ENCODE measurements at regions of chr1 and their contacts with region 1.

Region 1: GRCh38 chr1:78607334-78607927 is 12.8 kb upstream of the IFI44L start:
- DNase-seq: no peak
- H3K4me3 Mint-ChIP-seq: no peak overlapping the region
- H3K27ac Mint-ChIP-seq: no peak overlapping the region
- H3K4me1 Mint-ChIP-seq: no peaks in the 10 kb centered on the region
- H3K27me3 Mint-ChIP-seq: no peaks in the 10 kb centered on the region
- CTCF ChIP-seq: no peak

Region 2: GRCh38 chr1:78126506-78126905 is 480.9 kb before region 1 on chr1:
- CTCF ChIA-PET with region 1: interaction called, 7 read pairs
- intact Hi-C with region 1: loop called (anchors 1 kb)
- DNase-seq: no peak
- H3K4me3 Mint-ChIP-seq: no peak overlapping the region
- H3K27ac Mint-ChIP-seq: no peak overlapping the region
- H3K4me1 Mint-ChIP-seq: no peaks in the 10 kb centered on the region
- H3K27me3 Mint-ChIP-seq: no peaks in the 10 kb centered on the region
- CTCF ChIP-seq: no peak

Region 3: DNA sequence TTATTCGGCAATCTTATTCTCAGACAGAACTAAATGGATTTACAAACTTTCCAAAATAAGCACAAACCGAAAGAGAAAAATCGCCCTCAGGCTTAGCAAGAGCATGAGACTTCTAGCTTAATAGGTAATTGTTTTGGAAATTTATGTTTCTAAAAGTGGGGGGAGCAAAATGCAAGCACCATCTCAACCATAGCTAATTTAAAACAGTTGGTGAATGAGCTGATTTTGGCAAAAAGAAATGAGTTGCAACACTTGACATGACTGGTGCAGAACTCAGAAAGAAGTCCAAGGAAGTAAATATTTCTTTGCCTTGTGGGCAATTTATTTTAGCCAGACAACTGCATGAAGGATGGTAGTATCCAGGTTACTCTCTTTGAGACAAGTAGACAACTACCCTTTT is 188.1 kb before region 1 on chr1:
- CTCF ChIA-PET with region 1: no interaction called
- intact Hi-C with region 1: loop called (anchors 10 kb)
- DNase-seq: no peak
- H3K4me3 Mint-ChIP-seq: no peak overlapping the region
- H3K27ac Mint-ChIP-seq: no peak overlapping the region
- H3K4me1 Mint-ChIP-seq: no peaks in the 10 kb centered on the region
- H3K27me3 Mint-ChIP-seq: no peaks in the 10 kb centered on the region
- CTCF ChIP-seq: no peak

Region 4: GRCh38 chr1:78491451-78492071 is 115.9 kb before region 1 on chr1:
- CTCF ChIA-PET with region 1: no interaction called
- intact Hi-C with region 1: loop called (anchors 10 kb)
- DNase-seq: peak; percentile 31
- H3K4me3 Mint-ChIP-seq: peak overlapping the region; percentile 91
- H3K27ac Mint-ChIP-seq: no peak overlapping the region
- H3K4me1 Mint-ChIP-seq: peaks cover 27% of the 10 kb centered on the region
- H3K27me3 Mint-ChIP-seq: no peaks in the 10 kb centered on the region
- CTCF ChIP-seq: no peak

Region 5: GRCh38 chr1:78673120-78673519 is 65.7 kb after region 1 on chr1:
- CTCF ChIA-PET with region 1: no interaction called
- intact Hi-C with region 1: no loop called
- DNase-seq: no peak
- H3K4me3 Mint-ChIP-seq: no peak overlapping the region
- H3K27ac Mint-ChIP-seq: no peak overlapping the region
- H3K4me1 Mint-ChIP-seq: peaks cover 6% of the 10 kb centered on the region
- H3K27me3 Mint-ChIP-seq: no peaks in the 10 kb centered on the region
- CTCF ChIP-seq: no peak